Naive thymus-derived CD8-positive, alpha-beta T cell (primary cell): ENCODE measurements at regions of chr5 and their contacts with region 1.

Region 1: DNA sequence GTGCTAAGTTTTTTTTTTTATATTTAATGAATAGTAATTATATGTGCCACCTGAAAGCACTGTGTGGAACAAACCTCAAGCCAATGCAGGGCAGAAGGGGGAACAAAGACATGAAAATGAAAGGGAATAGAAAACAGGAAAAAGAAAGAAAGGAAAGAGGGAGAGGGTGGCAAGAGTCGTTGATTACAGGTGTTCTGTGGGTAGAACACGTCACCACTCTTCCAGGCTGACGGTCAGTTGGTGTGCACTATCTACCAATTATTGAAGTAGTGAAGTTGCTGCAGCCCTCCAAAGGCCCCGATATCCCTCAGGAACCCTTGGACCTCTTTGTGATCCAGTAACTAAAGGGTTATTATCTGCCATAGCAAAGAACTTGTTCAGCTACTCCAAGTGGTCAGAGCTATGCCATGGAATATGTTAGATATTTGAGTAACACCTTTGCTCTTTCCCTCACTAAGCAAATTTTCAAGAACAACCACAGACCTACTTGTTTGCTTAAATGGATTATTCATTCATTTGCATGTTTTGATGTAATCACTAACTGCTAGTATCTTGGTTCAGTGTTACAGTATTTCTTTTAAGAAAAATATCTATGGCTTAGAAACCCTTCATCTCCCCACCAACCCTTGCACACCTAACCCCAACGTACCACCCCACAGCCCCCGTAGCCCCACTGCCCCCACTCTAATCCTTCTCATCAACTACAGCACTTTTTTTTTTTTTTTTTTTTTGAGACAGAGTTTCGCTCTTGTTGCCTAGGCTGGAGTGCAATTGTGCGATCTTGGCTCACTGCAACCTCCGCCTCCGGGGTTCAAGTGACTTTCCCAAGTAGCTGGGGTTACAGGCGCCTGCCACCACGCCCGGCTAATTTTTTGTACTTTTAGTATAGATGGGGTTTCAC is 31.3 kb downstream of the FYB1 start:
- DNase-seq: peak in 4 of 10 donors; percentile 32 to 64 (median 56)
- ATAC-seq: peak; percentile 30 to 36
- H3K4me3 Mint-ChIP-seq: peak overlapping the region; percentile 75 to 94 (median 88)
- H3K27ac Mint-ChIP-seq: peak overlapping the region; percentile 94 to 100 (median 96)
- H3K4me1 Mint-ChIP-seq: peaks cover 30 to 95% (median 90%) of the 10 kb centered on the region in 4 donors
- H3K27me3 Mint-ChIP-seq: no peaks in the 10 kb centered on the region

Region 2: DNA sequence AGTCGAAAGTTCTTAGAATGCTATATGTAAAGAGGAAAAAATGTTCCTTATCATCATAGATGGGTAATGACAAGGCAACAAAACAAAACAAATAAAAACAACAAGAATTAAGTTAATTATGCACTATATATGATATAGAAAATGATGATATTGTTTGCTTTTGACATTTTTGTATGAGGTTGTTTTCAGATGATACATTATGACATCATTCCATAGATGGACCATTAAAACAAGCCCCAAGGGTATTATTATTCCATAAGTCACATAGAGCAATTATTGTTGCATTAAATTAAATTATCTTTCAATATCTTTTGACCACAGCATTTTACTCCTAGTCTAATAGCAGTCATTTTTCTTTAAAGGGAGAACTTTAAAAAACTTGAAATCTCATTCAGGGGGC is 57.4 kb before region 1 on chr5:
- POLR2A ChIA-PET with region 1: no interaction called
- DNase-seq: no peak
- ATAC-seq: no peak
- H3K4me3 Mint-ChIP-seq: no peak overlapping the region
- H3K27ac Mint-ChIP-seq: peak overlapping the region in 5 of 10 donors; percentile 35 to 93 (median 75)
- H3K4me1 Mint-ChIP-seq: peaks cover 23 to 52% (median 39%) of the 10 kb centered on the region in 4 donors
- H3K27me3 Mint-ChIP-seq: no peaks in the 10 kb centered on the region

Region 3: DNA sequence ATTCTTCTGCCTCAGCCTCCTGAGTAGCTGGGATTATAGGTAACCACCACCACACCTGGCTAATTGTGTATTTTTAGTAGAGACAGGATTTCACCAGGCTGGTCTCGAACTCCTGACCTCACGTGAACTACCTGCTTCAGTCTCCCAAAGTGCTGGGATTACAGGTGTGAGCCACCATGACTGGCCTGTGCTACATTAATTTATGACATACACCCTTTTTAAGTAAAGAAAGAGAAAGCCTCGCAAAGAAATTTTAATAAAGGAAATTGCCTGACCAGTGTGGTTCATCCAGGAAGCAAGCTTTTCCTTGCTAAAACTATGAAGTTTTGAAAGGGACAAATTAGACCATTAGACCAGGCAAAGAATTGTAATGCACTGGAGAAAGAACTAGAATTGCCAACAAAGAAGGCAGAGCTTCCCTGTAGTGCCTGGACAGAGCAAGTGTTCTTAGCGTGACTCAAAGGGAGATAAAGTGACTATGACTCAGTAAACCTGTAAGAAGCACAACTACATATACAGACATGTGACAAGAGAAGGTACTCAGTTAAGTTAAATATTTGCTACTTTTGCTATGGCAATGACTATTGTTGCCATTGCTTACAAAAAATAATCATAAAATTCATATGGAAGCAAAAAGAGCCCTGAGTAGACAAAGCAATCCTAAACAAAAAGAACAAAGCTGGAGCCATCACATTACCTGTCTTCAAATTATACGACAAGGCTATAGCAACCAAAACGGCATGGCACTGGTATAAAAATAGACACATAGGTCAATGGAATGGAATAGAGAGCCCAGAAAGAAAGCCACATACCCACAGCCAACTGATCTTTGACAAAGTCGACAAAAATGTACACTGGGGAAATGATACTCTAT is 23.3 kb before region 1 on chr5:
- POLR2A ChIA-PET with region 1: interaction called, 15 read pairs
- DNase-seq: no peak
- ATAC-seq: peak; percentile 53 to 66
- H3K4me3 Mint-ChIP-seq: peak overlapping the region; percentile 48 to 81 (median 73)
- H3K27ac Mint-ChIP-seq: peak overlapping the region; percentile 85 to 95 (median 92)
- H3K4me1 Mint-ChIP-seq: peaks cover 46 to 92% (median 87%) of the 10 kb centered on the region in 4 donors
- H3K27me3 Mint-ChIP-seq: no peaks in the 10 kb centered on the region

Region 4: DNA sequence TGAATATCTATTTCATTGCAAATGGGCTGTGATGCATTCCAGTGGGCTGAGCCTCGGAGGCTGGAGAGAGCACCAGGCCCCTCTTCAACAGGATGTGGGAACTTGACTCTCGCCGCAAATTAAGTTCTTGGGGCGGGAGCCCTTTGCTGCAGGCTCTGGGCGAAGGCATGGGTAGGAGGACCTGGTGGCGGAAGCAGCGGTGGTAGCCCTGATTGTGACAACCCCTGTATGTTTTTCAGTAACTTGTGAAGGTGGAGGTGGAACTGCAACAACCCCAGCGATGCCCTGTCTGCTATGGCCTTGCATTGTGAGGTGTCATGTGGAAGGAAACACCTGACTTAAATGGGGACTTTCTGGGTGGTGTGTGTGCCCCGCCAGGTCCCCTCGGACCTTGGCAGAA is 21.8 kb after region 1 on chr5:
- POLR2A ChIA-PET with region 1: interaction called, 78 read pairs
- DNase-seq: peak; percentile 44 to 89 (median 78)
- ATAC-seq: peak; percentile 77 to 83
- H3K4me3 Mint-ChIP-seq: peak overlapping the region; percentile 70 to 87 (median 82)
- H3K27ac Mint-ChIP-seq: peak overlapping the region; percentile 93 to 100 (median 96)
- H3K4me1 Mint-ChIP-seq: peaks cover 51 to 100% (median 95%) of the 10 kb centered on the region in 4 donors
- H3K27me3 Mint-ChIP-seq: no peaks in the 10 kb centered on the region

Region 5: DNA sequence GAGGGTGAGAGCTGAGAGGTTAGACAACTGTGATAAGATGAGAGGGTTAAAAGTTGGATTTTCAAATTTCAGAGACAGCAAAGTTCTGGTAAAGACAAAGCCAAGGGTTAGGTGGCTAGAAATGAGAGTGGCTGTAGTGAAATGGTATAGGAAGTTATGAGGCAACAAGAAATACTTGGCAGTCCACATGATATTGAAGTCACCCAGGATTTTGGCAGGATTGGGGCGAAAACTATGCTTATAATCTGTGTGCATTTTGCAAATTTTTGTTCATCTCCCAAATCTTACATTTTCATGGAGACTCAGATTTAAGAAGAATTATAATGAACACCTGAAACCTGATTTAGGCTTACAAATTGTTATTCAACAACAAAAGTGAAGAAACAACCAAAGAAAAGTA is 140.7 kb after region 1 on chr5:
- POLR2A ChIA-PET with region 1: interaction called, 10 read pairs
- DNase-seq: no peak
- ATAC-seq: no peak
- H3K4me3 Mint-ChIP-seq: no peak overlapping the region
- H3K27ac Mint-ChIP-seq: no peak overlapping the region
- H3K4me1 Mint-ChIP-seq: no peaks in the 10 kb centered on the region
- H3K27me3 Mint-ChIP-seq: peaks cover 0 to 8% (median 0%) of the 10 kb centered on the region in 5 donors

Region 6: GRCh38 chr5:39360471-39361111 is 172.5 kb after region 1 on chr5:
- POLR2A ChIA-PET with region 1: no interaction called
- DNase-seq: no peak
- ATAC-seq: no peak
- H3K4me3 Mint-ChIP-seq: no peak overlapping the region
- H3K27ac Mint-ChIP-seq: no peak overlapping the region
- H3K4me1 Mint-ChIP-seq: no peaks in the 10 kb centered on the region
- H3K27me3 Mint-ChIP-seq: no peaks in the 10 kb centered on the region

Region 7: DNA sequence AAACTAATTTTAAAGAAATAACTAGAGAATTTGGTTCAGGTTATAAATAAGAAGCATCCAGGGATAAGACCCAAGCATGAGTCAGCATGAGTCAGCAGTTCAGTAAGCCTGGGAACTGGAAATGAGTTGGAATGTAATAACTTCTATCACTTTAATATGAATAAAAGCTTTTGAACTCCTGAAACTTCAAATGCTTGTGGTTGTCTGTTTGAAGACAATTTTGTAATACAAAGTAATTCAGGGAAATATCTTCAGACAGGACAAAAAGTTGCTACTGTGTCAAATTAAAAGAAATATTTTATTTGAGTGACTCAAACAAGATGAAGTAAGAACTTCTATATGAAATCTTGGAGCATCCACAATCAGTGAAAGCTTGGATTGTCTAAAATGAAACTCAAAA is 567.9 kb after region 1 on chr5:
- POLR2A ChIA-PET with region 1: no interaction called
- DNase-seq: no peak
- ATAC-seq: no peak
- H3K4me3 Mint-ChIP-seq: no peak overlapping the region
- H3K27ac Mint-ChIP-seq: no peak overlapping the region
- H3K4me1 Mint-ChIP-seq: no peaks in the 10 kb centered on the region
- H3K27me3 Mint-ChIP-seq: peaks cover 0 to 20% (median 7%) of the 10 kb centered on the region in 5 donors